ENCODE measurements at regions of chr11 and their contacts with region 1.

Region 1: GRCh38 chr11:16785520-16786128 is 47.2 kb downstream of the C11orf58 start:
- DNase-seq: peak; percentile 59
- H3K4me3 ChIP-seq: no peak overlapping the region
- H3K27ac ChIP-seq: no peak overlapping the region
- H3K27me3 ChIP-seq: peaks cover 2% of the 10 kb centered on the region
- CTCF ChIP-seq: peak; percentile 94

Region 2: GRCh38 chr11:16440136-16440535 is 345.5 kb before region 1 on chr11:
- CTCF ChIA-PET with region 1: no interaction called
- POLR2A ChIA-PET with region 1: no interaction called
- DNase-seq: no peak
- H3K4me3 ChIP-seq: no peak overlapping the region
- H3K27ac ChIP-seq: no peak overlapping the region
- H3K27me3 ChIP-seq: no peaks in the 10 kb centered on the region
- CTCF ChIP-seq: no peak

Region 3: DNA sequence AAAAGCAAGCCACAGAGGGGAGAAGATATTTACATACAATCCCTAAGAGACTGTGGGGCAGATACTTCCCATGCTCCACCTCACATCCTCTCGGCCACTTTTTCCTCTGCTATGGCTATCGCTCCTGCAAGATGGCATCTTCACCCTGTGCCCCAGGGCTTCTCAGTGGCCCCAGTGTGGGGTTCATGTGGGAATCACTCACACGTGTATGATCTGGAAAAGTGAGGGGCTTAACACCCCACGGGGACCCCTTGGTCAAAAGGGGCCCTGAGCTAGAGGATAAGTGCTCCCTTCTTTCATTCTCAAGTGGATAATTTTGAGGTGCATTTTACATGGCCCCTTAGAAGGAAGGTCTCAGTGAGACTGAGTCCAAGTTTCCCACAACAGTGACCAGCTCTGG is 18.5 kb before region 1 on chr11:
- CTCF ChIA-PET with region 1: interaction called, 43 read pairs
- POLR2A ChIA-PET with region 1: no interaction called
- DNase-seq: no peak
- H3K4me3 ChIP-seq: no peak overlapping the region
- H3K27ac ChIP-seq: no peak overlapping the region
- H3K27me3 ChIP-seq: peaks cover 12% of the 10 kb centered on the region
- CTCF ChIP-seq: no peak

Region 4: DNA sequence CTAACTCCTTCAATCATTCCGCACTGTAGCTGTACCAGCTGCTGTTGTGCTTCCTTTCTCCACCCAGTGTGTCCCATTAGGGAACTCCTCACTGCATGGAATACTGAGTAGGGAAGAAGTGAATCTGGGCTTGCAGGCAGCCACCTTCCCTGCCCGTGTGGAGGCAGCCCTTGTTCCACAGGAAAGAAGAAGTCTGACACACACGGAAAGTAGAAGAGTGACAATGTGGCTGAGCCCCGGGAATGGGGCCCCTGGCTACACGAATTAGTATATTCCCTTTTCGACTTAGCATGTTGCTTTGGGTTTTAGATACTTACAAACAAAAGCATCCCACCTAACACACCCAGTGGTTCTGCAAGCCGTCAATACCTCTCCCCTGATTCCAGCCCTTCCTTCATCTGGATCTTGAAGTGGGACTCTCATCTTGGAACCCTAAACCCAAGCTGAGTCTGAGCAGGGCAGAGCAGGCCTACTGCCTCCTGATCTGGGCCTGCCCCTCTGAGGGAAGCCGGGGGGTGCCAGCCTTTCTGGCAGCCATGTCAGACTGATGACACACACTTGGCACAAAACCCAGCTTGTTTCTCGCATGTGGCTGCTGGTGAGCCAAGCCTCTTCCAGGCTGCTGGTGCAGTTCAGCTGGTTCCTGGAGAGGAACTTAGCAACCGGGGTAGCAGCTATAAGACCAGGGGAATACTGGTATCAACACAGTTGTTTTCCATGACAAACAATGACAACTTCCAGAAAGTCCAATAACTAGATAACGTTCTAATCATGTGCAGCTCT is 24.5 kb after region 1 on chr11:
- CTCF ChIA-PET with region 1: interaction called, 17 read pairs
- POLR2A ChIA-PET with region 1: no interaction called
- DNase-seq: no peak
- H3K4me3 ChIP-seq: no peak overlapping the region
- H3K27ac ChIP-seq: no peak overlapping the region
- H3K27me3 ChIP-seq: peaks cover 47% of the 10 kb centered on the region
- CTCF ChIP-seq: no peak

Region 5: DNA sequence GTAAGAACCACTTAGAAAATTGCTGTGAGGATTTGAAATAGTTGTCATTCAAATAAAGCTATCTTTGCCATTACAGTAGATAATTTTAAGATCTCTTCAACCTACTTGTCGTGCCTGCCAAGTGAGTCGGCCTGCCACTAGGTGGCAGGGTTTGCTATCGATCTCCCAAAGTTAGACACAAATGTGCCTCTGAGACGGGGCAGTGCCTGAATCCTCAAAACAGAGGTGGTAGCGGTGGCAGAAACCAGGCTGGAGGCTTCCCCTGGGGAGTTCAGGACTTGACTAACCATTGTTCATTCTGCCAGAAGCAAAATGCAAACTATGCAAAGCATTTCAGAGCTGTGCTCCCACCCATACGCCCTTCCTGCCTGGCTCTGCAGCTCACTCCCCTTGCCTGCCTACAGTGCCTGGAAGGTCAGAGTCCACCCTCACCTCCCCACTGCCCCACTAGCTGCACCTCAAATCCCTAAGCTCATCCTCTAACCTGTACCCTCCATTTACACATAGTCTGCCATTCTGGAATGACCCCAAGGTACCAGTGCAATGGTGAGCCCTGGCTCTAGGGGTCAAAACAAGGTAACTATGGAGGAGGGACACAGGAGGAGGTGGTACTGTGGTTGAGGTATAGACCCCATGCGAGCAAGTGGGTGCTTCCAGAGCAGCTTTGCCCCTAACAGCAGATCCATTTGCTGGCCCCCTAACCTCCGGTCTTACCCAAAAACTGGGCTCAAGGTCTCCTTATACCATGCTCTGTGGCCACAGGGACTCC is 34.9 kb after region 1 on chr11:
- CTCF ChIA-PET with region 1: interaction called, 37 read pairs
- POLR2A ChIA-PET with region 1: no interaction called
- DNase-seq: peak; percentile 29
- H3K4me3 ChIP-seq: no peak overlapping the region
- H3K27ac ChIP-seq: no peak overlapping the region
- H3K27me3 ChIP-seq: peaks cover 12% of the 10 kb centered on the region
- CTCF ChIP-seq: peak; percentile 88